ENCODE measurements at regions of chr1 and their contacts with region 1.

Region 1: GRCh38 chr1:168301664-168302334 is 21.1 kb downstream of the TBX19 start:
- DNase-seq: peak; percentile 88
- H3K4me3 Mint-ChIP-seq: no peak overlapping the region
- H3K27ac Mint-ChIP-seq: peak overlapping the region; percentile 78
- H3K4me1 Mint-ChIP-seq: peaks cover 37% of the 10 kb centered on the region
- H3K27me3 Mint-ChIP-seq: no peaks in the 10 kb centered on the region
- CTCF ChIP-seq: no peak

Region 2: GRCh38 chr1:168281603-168282325 is 20.0 kb before region 1 on chr1:
- CTCF ChIA-PET with region 1: interaction called, 11 read pairs
- POLR2A ChIA-PET with region 1: interaction called, 12 read pairs
- intact Hi-C with region 1: no loop called
- DNase-seq: no peak
- H3K4me3 Mint-ChIP-seq: no peak overlapping the region
- H3K27ac Mint-ChIP-seq: no peak overlapping the region
- H3K4me1 Mint-ChIP-seq: peaks cover 21% of the 10 kb centered on the region
- H3K27me3 Mint-ChIP-seq: no peaks in the 10 kb centered on the region
- CTCF ChIP-seq: no peak

Region 3: DNA sequence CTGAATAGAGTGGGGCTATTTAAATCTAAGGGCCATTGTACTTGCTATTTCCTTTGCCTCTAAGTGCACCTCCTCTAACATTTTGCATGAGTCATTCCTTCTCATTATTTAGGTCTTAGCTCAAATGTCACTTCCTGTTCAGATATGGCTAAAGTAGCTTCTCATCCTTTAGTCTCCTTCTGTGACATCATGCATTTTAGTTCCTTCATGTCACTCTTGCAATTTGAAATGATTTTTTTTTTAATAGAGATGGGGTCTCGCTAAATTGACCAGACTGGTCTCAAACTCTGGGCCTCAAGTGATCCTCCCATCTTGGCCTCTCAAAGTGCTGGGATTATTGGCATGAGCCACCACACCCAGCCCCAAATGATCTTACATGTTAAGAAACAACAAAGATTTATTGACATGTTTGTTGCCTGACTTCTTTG is 14.5 kb before region 1 on chr1:
- CTCF ChIA-PET with region 1: interaction called, 11 read pairs
- POLR2A ChIA-PET with region 1: interaction called, 22 read pairs
- intact Hi-C with region 1: no loop called
- DNase-seq: peak; percentile 58
- H3K4me3 Mint-ChIP-seq: no peak overlapping the region
- H3K27ac Mint-ChIP-seq: no peak overlapping the region
- H3K4me1 Mint-ChIP-seq: peaks cover 37% of the 10 kb centered on the region
- H3K27me3 Mint-ChIP-seq: no peaks in the 10 kb centered on the region
- CTCF ChIP-seq: no peak

Region 4: DNA sequence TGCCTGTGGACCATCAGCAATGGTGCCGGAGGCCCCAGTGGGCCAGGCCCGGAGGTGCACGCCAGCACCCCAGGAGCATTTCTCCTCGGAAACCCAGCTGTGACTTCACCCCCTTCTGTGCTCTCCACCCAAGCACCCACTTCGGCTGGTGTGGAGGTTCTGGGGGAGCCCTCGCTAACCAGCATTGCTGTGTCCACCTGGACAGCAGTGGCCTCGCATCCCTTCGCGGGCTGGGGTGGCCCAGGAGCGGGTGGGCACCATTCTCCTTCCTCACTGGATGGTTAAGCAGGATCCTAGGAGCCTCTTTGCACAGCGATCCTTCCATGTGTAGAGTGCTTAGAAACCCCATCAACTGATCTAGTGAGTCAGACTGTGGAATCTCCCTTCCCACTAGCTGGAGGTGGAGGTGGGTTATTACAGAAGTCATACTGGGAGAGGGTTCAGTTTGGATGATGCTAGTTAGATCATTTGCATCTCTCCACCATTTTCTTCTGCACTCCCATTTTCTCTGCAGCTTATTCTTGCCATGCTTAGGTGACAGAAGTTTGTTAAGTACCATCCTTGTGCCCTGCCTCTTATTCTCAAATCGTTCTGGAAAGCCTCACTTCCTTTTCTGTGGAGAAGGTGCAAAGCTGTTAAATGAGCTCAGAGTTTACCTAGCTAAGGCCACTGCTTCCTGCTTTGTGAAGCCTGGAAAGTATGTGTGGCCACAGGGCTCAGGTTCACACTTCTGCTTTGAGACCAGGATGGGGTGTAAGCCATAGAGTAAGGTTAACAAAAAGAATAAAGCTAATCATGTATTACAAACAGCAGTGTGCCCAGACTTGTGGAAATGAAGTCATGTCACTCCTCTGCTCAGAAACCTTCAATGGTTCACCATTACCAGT is 11.2 kb after region 1 on chr1:
- CTCF ChIA-PET with region 1: interaction called, 8 read pairs
- POLR2A ChIA-PET with region 1: interaction called, 11 read pairs
- intact Hi-C with region 1: no loop called
- DNase-seq: no peak
- H3K4me3 Mint-ChIP-seq: no peak overlapping the region
- H3K27ac Mint-ChIP-seq: no peak overlapping the region
- H3K4me1 Mint-ChIP-seq: no peaks in the 10 kb centered on the region
- H3K27me3 Mint-ChIP-seq: no peaks in the 10 kb centered on the region
- CTCF ChIP-seq: no peak

Measured in MCF 10A (cell line).